ENCODE measurements at regions of chr1 and their contacts with region 1.

Region 1: DNA sequence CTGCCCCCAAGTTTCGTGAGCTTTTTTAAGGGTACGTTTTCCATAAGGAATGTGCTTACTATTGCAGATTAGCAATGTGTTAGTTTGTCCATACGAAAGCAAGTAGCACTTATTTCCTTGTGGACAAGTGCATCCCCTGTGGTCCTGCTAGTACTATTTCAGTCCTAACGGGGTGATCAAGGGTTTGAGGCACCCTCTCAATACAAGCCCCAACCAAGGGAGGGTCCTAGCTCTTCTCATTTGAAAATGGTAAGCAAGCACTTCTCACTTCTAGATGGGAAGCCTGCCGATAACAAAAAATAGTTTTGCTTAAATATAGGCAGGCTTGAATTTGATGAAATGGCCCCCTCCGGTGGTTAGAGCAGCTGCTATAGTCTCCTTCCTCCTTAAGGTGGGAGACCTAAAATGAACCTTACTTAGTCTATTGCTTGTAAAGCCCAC is 64.0 kb upstream of the HMCN1 start:
- DNase-seq: peak; percentile 37 to 72 (median 52)
- H3K4me3 ChIP-seq: no peak overlapping the region
- H3K27ac ChIP-seq: no peak overlapping the region
- H3K4me1 ChIP-seq: no peaks in the 10 kb centered on the region
- H3K27me3 ChIP-seq: no peaks in the 10 kb centered on the region
- CTCF ChIP-seq: peak in 5 of 6 experiments; percentile 43 to 63 (median 55)
- POLR2A ChIP-seq: no peak

Region 2: GRCh38 chr1:185317034-185317885 is 352.9 kb before region 1 on chr1 and contains the start of gene IVNS1ABP:
- intact Hi-C with region 1: loop called in 1 of 2 experiments (anchors 10 kb)
- DNase-seq: peak; percentile 94 to 98 (median 95)
- H3K4me3 ChIP-seq: peak within 1 kb of the TSS; percentile 67 to 95 (median 90)
- H3K27ac ChIP-seq: peak within 1 kb of the TSS; percentile 91 to 98 (median 94)
- H3K4me1 ChIP-seq: peaks cover 12 to 41% of the 10 kb centered on the region in 2 donors
- H3K27me3 ChIP-seq: no peaks in the 10 kb centered on the region
- CTCF ChIP-seq: peak in 2 of 6 experiments; percentile 9 to 12
- POLR2A ChIP-seq: peak; percentile 97
- total RNA-seq, gene IVNS1ABP: 20.4 to 119 (median 42.2) TPM

Region 3: GRCh38 chr1:185426848-185427247 is 243.4 kb before region 1 on chr1:
- intact Hi-C with region 1: loop called in 1 of 2 experiments (anchors 10 kb)
- DNase-seq: peak; percentile 54 to 77 (median 67)
- H3K4me3 ChIP-seq: no peak overlapping the region
- H3K27ac ChIP-seq: no peak overlapping the region
- H3K4me1 ChIP-seq: peaks cover 0 to 8% of the 10 kb centered on the region in 2 donors
- H3K27me3 ChIP-seq: no peaks in the 10 kb centered on the region
- CTCF ChIP-seq: no peak
- POLR2A ChIP-seq: no peak

Measured in adrenal gland (tissue), 19 donors.